B cell (primary cell): ENCODE measurements at regions of chr22 and their contacts with region 1.

Region 1: GRCh38 chr22:22877523-22878210 is 9.9 kb upstream of the IGLL5 start:
- DNase-seq: peak; percentile 64
- ATAC-seq: no peak
- H3K4me3 ChIP-seq: no peak overlapping the region
- H3K4me3 Mint-ChIP-seq: no peak overlapping the region
- H3K27ac ChIP-seq: no peak overlapping the region
- H3K27ac Mint-ChIP-seq: peak overlapping the region; percentile 20
- H3K4me1 ChIP-seq: peaks cover 50 to 52% of the 10 kb centered on the region in 2 donors
- H3K4me1 Mint-ChIP-seq: peaks cover 62% of the 10 kb centered on the region
- H3K27me3 ChIP-seq: peaks cover 0 to 4% (median 2%) of the 10 kb centered on the region in 4 experiments
- H3K27me3 Mint-ChIP-seq: no peaks in the 10 kb centered on the region
- CTCF ChIP-seq: peak; percentile 67

Region 2: DNA sequence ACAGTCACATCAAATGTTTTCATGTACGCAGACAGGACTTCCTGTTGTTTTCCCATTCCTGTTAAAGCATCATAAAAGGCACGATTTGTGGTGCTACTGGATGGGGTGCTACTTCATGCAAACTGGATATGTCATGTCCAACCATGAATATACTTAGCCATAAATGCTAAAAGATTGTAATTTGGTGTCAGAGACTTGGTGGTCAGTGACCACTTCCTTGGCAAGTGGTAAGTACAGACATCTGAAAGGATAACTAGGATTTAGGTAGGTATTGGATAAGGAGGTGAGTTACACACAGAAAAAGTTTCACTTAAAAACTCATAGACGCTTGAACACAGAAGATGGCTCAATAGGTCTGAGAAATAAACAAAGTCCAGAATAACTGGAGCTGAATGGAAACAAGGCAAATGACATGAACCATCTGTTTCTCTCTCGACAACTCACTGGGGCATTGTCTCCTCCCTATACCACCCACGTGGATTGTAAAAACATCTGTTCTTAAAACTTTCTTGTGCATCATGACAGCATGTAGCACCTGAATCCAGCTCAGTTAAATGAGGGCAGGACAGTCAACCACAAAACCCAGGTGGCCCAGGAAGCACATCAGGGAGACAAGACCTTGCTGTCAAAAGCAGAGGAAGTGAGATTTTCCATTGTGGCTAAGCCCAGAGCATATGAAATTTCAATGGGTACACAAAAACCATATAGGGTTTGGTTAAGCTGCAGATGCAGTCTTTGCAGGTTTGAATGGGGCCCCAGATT is 12.2 kb before region 1 on chr22:
- CTCF ChIA-PET with region 1: interaction called, 24 read pairs
- POLR2A ChIA-PET with region 1: no interaction called
- intact Hi-C with region 1: loop called (anchors 2 kb)
- DNase-seq: peak; percentile 77
- ATAC-seq: peak; percentile 78
- H3K4me3 ChIP-seq: no peak overlapping the region
- H3K4me3 Mint-ChIP-seq: peak overlapping the region; percentile 39
- H3K27ac ChIP-seq: peak overlapping the region; percentile 39 to 45
- H3K27ac Mint-ChIP-seq: peak overlapping the region; percentile 74
- H3K4me1 ChIP-seq: peaks cover 29 to 35% of the 10 kb centered on the region in 2 donors
- H3K4me1 Mint-ChIP-seq: peaks cover 44% of the 10 kb centered on the region
- H3K27me3 ChIP-seq: no peaks in the 10 kb centered on the region
- H3K27me3 Mint-ChIP-seq: peaks cover 4% of the 10 kb centered on the region
- CTCF ChIP-seq: no peak

Region 3: DNA sequence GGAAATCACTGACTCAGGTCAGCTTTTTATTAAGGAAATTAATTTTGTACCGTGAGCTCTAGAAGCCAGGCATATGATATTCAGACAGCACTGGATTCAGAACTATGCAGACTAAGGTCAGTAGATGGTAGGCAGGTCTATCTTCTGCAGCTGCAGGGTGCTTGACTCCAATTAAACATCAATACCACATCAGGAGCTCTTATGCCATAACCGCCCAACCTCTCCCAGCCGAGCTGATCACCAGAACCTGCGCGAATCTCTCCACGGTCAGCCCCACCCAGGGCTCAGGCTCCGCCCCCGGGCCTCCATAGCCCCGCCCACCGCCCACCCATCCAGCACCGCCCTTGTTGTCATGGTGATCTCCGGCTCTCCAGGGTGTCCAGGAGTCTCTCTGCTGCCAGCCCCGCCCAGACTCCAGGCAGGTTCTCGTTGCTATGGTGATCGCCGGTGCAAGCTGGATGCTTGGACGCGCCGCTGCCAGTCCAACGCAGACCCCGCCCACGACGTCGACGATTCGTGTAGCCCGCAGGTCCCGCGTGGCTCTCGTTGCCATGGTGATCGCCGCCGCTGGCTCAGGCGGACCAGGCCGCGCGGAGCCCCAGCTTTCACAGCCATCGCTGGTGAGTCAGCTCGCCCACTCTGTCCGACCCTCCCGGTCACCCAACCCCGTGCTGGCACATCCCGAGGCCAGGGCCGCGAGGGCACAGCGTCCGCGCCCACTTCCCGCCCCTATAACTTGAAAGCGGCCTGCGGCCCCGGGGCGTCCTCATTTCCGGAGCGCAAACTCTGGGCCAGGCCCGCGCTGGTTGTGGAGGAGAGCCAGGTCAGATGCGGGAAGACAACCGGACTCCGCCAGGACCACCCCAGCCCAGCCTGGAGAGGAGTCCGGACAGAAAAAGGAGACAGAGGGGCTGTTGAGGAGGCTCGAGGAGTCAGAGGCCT is 267.5 kb after region 1 on chr22 and contains the start of gene RAB36:
- CTCF ChIA-PET with region 1: no interaction called
- POLR2A ChIA-PET with region 1: interaction called, 10 read pairs
- intact Hi-C with region 1: no loop called
- DNase-seq: peak; percentile 99
- ATAC-seq: peak; percentile 60
- H3K4me3 ChIP-seq: peak within 1 kb of the TSS; percentile 16 to 52 (median 43)
- H3K4me3 Mint-ChIP-seq: peak within 1 kb of the TSS; percentile 89
- H3K27ac ChIP-seq: peak within 1 kb of the TSS; percentile 65 to 83
- H3K27ac Mint-ChIP-seq: peak within 1 kb of the TSS; percentile 96
- H3K4me1 ChIP-seq: peaks cover 41 to 58% of the 10 kb centered on the region in 2 donors
- H3K4me1 Mint-ChIP-seq: peaks cover 44% of the 10 kb centered on the region
- H3K27me3 ChIP-seq: no peaks in the 10 kb centered on the region
- H3K27me3 Mint-ChIP-seq: no peaks in the 10 kb centered on the region
- CTCF ChIP-seq: no peak
- total RNA-seq, gene RAB36: 1.9 and 3.3 TPM in 2 replicates